Spleen (tissue), 13 donors: ENCODE measurements at regions of chr3 and their contacts with region 1.

Region 1: DNA sequence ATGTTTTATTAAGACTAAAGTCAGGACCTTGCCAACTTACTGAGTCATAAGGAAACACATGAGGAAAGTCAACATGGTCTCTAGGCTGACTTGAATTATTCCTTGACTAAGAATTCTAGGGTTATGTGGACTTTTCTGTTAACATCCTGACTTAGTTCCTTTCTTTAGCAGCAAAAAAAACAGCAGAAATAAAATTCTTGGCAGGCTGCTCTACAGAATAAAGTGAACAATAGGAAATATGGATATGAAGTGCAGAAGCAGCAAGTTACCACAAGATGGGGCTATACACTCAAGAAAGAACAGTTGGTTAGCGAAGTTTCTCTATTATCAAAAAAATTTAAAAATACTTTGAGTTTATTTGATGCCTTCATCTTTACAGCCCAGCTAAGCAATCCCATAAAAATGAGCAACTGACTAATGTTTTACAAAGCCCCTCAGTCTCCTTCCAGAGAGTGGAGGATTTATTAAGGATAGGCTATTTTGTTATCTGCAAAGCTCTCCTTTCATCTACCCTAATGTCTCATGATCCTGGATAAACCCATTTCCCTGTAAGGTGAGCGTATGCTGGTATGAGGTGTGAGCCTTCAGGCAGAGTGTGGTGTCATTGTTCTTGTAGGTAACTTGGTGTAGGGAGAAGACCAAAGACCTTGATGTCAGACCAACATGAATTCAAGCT is 23.1 kb upstream of the MCCC1 start:
- DNase-seq: no peak
- H3K4me3 ChIP-seq: no peak overlapping the region
- H3K27ac ChIP-seq: no peak overlapping the region
- H3K4me1 ChIP-seq: peaks cover 0 to 7% (median 2%) of the 10 kb centered on the region in 6 donors
- H3K27me3 ChIP-seq: peaks cover 0 to 59% (median 0%) of the 10 kb centered on the region in 7 donors
- CTCF ChIP-seq: peak; percentile 57 to 91 (median 87)
- POLR2A ChIP-seq: no peak

Region 2: DNA sequence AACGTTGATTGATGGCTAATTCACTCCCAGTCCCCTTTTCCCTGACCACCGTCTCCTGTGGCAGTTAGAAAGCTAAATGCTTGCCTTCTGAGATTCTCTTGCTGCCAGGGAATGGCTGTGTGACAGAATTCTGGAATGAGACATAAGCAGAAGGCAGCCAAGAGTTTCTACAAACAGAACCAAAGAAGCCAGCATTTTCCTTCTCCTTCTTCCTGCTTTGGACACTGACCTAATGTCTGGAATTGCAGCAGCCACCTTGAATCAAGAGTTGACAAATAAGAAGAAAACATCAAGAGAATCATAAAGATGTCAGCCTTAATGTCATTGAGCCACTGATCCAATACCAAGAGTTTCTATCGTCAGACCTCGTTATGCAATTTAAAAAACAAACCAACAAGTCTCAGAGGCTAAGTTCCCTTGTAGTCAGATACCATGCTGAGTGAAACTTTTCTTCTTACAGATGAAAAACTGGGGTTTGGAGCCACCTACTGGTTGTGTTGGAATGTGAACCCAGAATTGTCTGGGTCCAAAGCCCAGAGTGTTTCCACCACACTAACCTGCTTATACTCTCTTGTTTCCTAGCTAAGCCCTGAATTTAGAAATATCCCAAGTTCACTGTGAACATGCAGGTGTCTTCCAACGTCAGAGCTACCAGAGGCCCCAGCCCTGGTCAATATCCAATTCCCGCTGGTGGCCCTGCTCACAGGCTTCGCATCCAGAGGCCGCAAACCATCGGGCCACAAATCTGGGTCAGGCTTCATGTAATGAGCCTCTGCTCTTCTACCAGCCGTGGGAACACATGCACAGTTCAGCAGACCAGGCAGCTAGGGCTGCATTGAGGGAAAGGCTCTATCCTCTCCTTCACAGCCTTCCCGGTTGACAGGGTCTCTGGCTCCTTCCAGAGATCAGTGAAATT is 263.6 kb after region 1 on chr3:
- intact Hi-C with region 1: loop called (anchors 5 kb)
- DNase-seq: no peak
- H3K4me3 ChIP-seq: no peak overlapping the region
- H3K27ac ChIP-seq: no peak overlapping the region
- H3K4me1 ChIP-seq: peaks cover 0 to 21% (median 15%) of the 10 kb centered on the region in 6 donors
- H3K27me3 ChIP-seq: no peaks in the 10 kb centered on the region
- CTCF ChIP-seq: peak; percentile 46 to 87 (median 72)
- POLR2A ChIP-seq: no peak

Region 3: DNA sequence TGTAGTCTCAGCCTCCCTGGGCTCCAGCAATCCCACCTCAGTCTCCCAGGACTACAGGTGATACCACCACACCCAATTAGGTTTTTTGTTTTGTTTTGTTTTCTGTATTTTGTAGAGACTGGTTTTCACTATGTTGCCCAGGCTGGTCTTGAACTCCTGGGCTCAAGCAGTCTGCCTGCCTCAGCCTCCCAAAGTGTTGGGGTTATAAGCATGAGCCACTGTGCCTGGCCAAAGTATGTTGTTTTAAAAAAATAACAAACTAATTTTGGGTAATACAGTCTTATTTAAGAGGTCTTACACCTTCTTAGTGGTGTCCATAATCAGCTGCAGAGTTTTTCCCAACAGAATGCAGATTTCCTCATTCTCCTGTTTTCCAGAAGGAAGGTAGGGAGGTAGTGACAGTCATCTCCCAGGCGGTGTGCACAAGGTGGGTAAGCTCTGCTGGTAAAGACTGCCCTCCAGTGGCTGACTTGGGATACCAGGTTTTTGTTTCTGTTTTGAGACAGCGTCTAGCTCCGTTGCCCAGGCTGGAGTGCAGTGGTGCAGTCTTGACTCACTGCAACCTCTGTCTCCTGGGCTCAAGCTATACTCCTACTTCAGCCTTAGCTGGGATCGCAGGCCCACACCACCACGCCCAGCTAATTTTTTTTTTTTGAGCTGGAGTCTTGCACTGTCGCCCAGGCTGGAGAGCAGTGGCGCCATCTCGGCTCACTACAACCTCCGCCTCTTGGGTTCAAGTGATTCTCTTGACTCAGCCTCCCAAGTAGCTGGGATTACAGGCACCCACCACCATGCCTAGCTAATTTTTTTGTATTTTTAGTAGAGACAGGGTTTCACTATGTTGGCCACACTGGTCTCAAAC is 644.6 kb after region 1 on chr3:
- intact Hi-C with region 1: loop called (anchors 10 kb)
- DNase-seq: peak; percentile 78
- H3K4me3 ChIP-seq: no peak overlapping the region
- H3K27ac ChIP-seq: no peak overlapping the region
- H3K4me1 ChIP-seq: peaks cover 0 to 29% (median 8%) of the 10 kb centered on the region in 6 donors
- H3K27me3 ChIP-seq: no peaks in the 10 kb centered on the region
- CTCF ChIP-seq: peak; percentile 49 to 84 (median 77)
- POLR2A ChIP-seq: no peak